Activated CD4-positive, alpha-beta T cell treated with anti-CD3 and anti-CD28 coated beads for 36 hours (primary cell): ENCODE measurements at regions of chr19 and their contacts with region 1.

Region 1: DNA sequence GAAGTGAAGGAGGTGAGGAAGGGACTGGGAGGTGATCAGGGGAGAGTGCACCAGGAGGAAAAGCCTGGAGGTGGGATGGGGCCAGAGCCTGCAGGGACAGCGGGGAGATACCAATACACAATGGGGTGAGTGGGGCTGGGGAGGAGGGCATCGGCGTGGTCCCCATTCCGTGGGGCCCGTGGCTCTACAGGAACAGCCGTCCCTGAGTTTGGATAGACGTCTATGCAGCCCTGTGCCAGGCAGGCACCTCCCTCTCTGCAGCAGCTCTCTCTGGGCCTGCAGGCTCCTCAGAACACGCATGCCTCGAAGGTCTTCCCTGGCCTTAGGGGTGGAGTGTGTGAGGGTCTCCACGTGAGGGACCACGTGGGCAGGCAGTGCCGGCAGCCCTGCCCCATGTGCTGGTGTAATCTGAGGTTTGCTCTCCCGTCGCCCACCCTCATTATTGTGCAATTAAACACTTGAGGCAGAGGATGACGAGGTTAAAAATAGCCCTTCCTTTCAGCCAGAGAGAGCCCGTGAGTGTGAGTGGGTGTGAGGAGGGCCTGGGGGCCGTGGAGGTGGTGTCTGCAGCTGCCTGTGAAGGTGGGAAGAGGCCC is 16.5 kb downstream of the C2CD4C start:
- DNase-seq: no peak
- ATAC-seq: no peak
- H3K4me3 Mint-ChIP-seq: no peak overlapping the region
- H3K27ac Mint-ChIP-seq: no peak overlapping the region
- H3K4me1 Mint-ChIP-seq: no peaks in the 10 kb centered on the region
- H3K27me3 Mint-ChIP-seq: peaks cover 4% of the 10 kb centered on the region

Region 2: GRCh38 chr19:377801-378581 is 14.5 kb before region 1 on chr19:
- CTCF ChIA-PET with region 1: no interaction called
- POLR2A ChIA-PET with region 1: no interaction called
- intact Hi-C with region 1: no loop called
- DNase-seq: no peak
- ATAC-seq: no peak
- H3K4me3 Mint-ChIP-seq: no peak overlapping the region
- H3K27ac Mint-ChIP-seq: no peak overlapping the region
- H3K4me1 Mint-ChIP-seq: peaks cover 8% of the 10 kb centered on the region
- H3K27me3 Mint-ChIP-seq: peaks cover 8% of the 10 kb centered on the region

Region 3: DNA sequence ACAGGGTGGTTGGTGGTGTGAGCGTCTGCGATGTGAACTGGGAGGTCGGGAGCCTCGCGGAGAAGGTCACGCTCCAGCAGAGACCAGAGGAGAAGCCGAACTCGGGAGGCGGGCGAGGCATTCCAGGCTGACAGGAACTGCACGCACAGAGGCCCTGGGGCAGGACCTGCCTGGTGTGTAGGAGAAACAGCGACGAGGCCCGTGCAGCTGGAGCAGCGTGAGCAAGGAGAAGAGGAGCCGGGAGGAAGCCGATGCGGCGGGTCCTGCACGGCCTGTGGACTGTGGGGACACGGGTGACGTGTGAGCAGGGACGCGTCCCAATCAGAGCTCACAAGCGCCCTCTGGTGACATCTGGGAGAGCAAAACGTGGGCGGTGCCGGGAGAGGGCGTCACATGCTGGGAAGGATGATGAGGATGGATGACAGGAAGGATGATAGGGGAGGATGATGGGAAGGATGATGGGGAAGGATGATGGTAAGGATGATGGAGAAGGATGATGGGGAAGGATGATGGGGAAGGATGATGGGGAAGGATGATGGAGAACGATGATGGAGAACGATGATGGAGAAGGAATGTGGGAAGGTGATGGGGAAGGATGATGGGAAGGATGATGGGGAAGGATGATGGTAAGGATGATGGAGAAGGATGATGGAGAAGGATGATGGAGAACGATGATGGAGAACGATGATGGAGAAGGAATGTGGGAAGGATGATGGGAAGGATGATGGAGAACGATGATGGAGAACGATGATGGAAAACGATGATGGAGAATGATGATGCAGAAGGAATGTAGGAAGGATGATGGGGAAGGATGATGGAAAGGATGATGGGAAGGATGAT is 87.8 kb after region 1 on chr19:
- CTCF ChIA-PET with region 1: no interaction called
- POLR2A ChIA-PET with region 1: no interaction called
- intact Hi-C with region 1: loop called (anchors 1 to 10 kb)
- DNase-seq: peak; percentile 73
- ATAC-seq: peak; percentile 55
- H3K4me3 Mint-ChIP-seq: peak overlapping the region; percentile 60
- H3K27ac Mint-ChIP-seq: peak overlapping the region; percentile 75
- H3K4me1 Mint-ChIP-seq: peaks cover 11% of the 10 kb centered on the region
- H3K27me3 Mint-ChIP-seq: peaks cover 11% of the 10 kb centered on the region